Activated CD4-positive, alpha-beta T cell treated with anti-CD3 and anti-CD28 coated beads for 36 hours (primary cell): ENCODE measurements at regions of chr2 and their contacts with region 1.

Region 1: DNA sequence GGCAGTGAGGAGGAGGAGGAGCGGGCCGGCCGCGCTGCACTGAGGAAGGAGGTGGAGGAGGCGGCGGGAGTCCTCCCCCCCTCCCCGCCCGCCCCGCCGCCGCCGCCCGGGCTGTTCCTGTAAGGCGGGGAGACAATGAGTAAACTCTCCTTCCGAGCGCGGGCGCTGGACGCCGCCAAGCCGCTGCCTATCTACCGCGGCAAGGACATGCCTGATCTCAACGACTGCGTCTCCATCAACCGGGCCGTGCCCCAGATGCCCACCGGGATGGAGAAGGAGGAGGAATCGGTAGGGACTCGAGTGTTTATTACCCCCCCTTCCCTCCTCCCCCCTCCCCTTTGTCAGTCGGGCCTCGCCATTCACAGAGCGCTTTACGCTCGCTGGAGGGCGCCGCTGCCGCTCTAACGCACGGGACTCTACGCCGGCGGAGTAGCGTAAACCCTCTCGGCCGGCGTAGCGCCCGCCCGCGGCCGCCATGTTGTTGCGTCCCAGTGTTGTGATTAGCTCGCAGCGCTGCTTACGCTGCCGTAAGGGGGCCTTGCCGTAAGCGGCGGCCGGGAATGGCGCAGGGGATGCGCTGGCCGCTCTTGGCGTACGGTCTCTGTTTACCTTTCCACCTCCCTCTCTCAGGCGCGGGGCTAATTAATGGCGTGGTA is 460 bp downstream of the EPC2 start:
- DNase-seq: peak; percentile 96
- ATAC-seq: peak; percentile 74
- H3K4me3 Mint-ChIP-seq: peak overlapping the region; percentile 83
- H3K27ac Mint-ChIP-seq: peak overlapping the region; percentile 94
- H3K4me1 Mint-ChIP-seq: peaks cover 44% of the 10 kb centered on the region
- H3K27me3 Mint-ChIP-seq: peaks cover 13% of the 10 kb centered on the region

Region 2: DNA sequence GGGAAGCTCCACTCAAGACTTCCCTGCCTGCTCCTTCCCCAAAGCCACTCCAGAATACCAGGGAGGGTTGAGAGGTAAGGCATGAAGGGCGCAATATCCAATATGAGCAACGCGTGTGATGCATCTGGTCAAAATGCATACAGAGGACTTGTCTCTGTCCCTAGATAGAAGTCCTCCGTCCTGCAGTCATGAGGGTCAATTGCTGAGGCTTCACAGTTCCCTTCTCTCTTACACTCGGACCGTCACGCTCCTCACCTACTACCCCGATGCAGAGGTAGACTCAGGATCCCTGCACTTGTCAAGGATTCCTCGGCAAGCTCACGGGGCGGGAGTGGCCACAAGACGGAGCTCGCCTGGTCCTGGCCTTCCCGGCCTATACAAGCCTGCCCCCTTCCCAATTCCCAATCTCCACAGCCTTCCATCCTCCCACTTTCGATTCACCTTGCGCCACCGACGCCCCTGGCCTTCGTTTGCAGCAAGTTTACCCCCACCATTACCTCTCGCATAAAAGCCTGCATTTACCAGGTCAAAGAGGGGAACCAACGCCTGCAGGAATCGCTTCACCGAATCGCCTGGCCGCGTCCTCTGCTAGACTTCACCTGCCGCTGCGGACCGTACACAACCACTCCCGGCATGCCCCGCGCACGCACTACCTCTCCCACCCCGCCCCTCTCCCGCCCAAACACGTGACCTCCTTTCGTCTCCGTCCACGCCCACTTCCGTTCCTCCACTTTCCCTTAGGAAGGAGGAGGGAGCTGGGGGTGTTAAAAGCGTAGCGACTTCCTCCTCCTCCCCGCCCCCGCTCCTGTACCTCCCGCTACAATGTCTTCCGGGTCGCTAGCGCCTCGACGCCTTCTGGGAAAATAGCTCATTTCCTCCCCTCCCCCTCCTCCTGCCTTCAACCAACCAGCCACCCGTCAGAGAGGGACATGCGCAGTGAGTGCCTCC is 624.6 kb before region 1 on chr2 and contains the start of gene ORC4:
- CTCF ChIA-PET with region 1: no interaction called
- POLR2A ChIA-PET with region 1: interaction called, 7 read pairs
- intact Hi-C with region 1: loop called (anchors 1 kb)
- DNase-seq: peak; percentile 99
- ATAC-seq: peak; percentile 89
- H3K4me3 Mint-ChIP-seq: peak within 1 kb of the TSS; percentile 95
- H3K27ac Mint-ChIP-seq: peak within 1 kb of the TSS; percentile 98
- H3K4me1 Mint-ChIP-seq: peaks cover 44% of the 10 kb centered on the region
- H3K27me3 Mint-ChIP-seq: no peaks in the 10 kb centered on the region
- total RNA-seq, gene ORC4: 41.2 to 41.8 TPM

Region 3: DNA sequence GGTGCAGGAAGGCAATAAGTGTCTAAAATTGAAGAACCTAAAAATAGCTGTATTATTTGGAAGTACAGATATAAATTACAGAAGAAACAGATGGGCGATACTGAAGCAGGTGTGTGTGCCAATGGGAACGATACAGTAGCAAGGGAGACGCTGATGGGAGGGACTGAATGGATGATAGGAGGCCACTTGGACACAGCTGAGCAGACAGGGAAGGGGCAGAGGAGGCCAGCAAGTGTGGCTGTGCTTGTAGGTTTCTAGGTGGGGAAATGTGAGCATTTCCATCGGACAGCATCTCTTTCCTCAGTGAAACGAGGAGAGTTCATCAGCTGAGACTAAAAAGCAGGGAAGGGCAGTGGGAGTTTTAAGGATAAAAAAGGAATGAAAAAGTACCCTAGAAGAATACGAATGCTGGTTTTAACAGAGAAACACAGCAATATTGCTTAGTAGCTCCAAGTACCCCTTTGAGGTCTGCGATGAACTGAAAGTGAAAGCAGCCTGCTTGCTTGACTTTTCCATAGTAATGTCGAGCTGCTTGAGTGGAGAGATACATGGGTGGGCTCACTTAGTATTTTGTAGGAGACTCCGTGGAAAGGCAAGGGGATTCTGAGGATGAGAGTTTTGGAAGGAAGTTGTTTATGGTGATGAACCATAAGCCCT is 92.2 kb before region 1 on chr2:
- CTCF ChIA-PET with region 1: no interaction called
- POLR2A ChIA-PET with region 1: interaction called, 3 read pairs
- intact Hi-C with region 1: loop called in 1 of 2 experiments (anchors 2 kb)
- DNase-seq: peak; percentile 51
- ATAC-seq: peak; percentile 78
- H3K4me3 Mint-ChIP-seq: no peak overlapping the region
- H3K27ac Mint-ChIP-seq: no peak overlapping the region
- H3K4me1 Mint-ChIP-seq: peaks cover 2% of the 10 kb centered on the region
- H3K27me3 Mint-ChIP-seq: no peaks in the 10 kb centered on the region

Region 4: DNA sequence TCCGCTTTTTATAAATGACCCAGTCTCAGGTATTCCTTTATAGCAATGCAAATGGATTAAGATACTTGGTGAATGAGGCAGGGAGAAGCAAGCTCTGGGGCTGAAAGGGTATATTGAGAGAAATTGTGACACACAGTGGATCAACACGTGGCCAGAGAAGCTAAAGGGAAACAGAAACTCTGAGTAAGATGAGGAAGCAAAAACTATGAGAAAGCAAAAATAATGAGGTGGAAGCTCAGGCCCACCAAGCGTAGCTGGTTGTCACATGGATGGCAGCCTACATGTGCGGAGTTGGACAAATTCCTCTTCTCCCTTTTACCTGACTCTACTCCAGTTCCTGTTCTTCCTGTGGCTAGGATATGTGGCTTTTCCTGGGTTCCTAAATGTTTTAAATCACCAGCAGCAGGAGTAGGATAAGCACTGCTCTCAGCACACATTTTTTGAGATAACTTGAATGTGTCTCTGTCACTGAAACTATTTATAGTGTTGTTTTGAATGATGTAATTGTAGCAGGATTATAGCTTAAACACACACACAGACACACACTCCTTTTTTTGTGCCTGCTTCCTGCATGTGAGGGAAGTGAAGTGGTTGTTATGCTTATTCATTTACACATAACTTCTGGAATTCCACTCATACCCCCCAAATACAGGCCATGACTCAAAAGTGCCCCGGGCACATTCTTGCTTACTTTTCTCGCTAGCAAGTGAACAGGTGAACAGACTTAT is 30.5 kb before region 1 on chr2:
- CTCF ChIA-PET with region 1: interaction called, 3 read pairs
- POLR2A ChIA-PET with region 1: interaction called, 5 read pairs
- intact Hi-C with region 1: loop called in 1 of 2 experiments (anchors 1 kb)
- DNase-seq: peak; percentile 32
- ATAC-seq: peak; percentile 93
- H3K4me3 Mint-ChIP-seq: no peak overlapping the region
- H3K27ac Mint-ChIP-seq: peak overlapping the region; percentile 44
- H3K4me1 Mint-ChIP-seq: peaks cover 10% of the 10 kb centered on the region
- H3K27me3 Mint-ChIP-seq: peaks cover 3% of the 10 kb centered on the region

Region 5: DNA sequence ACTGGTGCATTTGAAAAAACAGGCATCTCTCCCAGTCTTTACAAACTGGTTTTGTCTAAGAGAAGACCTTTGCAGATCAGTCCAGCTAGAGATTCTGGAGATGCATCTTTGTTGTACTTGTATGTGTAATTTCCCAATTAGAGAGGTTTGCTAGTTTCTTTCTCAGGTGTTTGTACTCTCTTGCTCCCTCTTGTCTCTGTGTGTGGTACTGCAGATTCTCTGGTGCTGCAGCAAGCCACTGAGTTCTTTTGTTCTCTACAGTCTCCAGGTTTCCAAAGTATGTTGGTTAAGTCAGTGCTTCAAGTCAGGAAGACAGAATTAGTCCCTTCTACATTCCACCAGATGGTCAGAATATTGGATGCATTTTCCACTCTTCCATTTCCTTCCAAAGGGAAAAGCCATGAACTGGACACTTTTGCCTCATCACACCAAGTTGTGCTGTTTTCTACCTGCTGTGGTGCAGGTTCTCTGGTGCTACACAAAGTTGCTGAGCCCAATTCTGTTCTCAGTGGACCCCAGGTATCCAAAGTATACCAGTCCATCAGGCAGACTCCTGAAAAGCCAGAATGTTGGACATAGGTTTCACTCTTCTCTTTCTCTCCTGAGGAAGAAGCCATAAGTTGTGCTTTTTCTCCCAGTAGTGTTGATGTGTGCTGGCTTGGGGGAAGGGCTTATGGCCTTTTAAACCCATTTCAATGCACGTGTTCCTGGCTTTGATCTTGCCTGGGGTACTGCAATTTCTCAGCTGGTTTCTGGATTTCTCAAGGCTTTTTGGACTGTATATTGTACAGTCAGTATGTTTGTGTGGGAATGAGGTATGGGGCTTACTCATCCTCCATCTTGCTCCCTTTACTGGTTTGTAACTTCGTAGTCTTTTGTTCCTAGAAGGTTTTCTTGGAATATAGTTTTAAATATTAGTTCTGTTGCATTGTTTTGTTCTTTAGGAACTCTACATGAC is 29.3 kb after region 1 on chr2:
- CTCF ChIA-PET with region 1: interaction called, 3 read pairs
- POLR2A ChIA-PET with region 1: interaction called, 5 read pairs
- intact Hi-C with region 1: loop called (anchors 1 kb)
- DNase-seq: peak; percentile 52
- ATAC-seq: peak; percentile 75
- H3K4me3 Mint-ChIP-seq: no peak overlapping the region
- H3K27ac Mint-ChIP-seq: peak overlapping the region; percentile 64
- H3K4me1 Mint-ChIP-seq: peaks cover 59% of the 10 kb centered on the region
- H3K27me3 Mint-ChIP-seq: no peaks in the 10 kb centered on the region

Region 6: DNA sequence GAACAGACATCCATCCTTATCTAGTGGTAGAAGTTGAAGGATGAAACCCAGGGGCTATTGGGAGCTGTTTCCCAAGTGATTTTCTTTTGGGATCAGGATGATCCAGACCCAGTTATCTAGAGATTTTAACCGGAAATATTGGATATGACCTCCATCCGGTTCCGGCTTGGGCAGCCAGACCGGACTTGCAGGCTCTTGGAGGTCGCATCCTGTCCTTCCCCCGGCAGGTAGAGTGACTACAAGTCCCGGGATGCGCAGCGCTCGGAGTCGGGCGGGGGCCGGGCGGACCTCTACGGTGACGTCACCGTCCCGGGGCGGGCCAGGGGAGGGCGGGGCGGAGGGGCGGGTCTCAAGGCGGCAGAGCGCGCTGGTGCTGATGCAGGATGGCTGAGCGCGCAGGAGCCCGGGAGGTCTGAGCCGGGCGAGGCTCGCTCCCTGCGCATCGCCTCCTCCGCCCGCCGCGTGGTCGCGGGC is 229.9 kb after region 1 on chr2 and contains the start of gene KIF5C:
- CTCF ChIA-PET with region 1: interaction called, 3 read pairs
- POLR2A ChIA-PET with region 1: no interaction called
- intact Hi-C with region 1: loop called (anchors 1 kb)
- DNase-seq: peak; percentile 97
- ATAC-seq: peak; percentile 86
- H3K4me3 Mint-ChIP-seq: peak within 1 kb of the TSS; percentile 82
- H3K27ac Mint-ChIP-seq: peak within 1 kb of the TSS; percentile 73
- H3K4me1 Mint-ChIP-seq: peaks cover 7% of the 10 kb centered on the region
- H3K27me3 Mint-ChIP-seq: peaks cover 16% of the 10 kb centered on the region
- total RNA-seq, gene KIF5C: 13.5 to 14.1 TPM